HepG2 (cell line): ENCODE measurements at regions of chr3 and their contacts with region 1.

Region 1: GRCh38 chr3:82202269-82202668 is 440.8 kb upstream of the GBE1 start:
- DNase-seq: no peak
- ATAC-seq: no peak
- H3K4me3 ChIP-seq: no peak overlapping the region
- H3K27ac ChIP-seq: no peak overlapping the region
- H3K4me1 ChIP-seq: no peaks in the 10 kb centered on the region
- H3K27me3 ChIP-seq: no peaks in the 10 kb centered on the region
- CTCF ChIP-seq: no peak
- EP300 ChIP-seq: no peak
- POLR2A ChIP-seq: no peak
- RAD21 ChIP-seq: no peak

Region 2: GRCh38 chr3:82114589-82114988 is 87.7 kb before region 1 on chr3:
- CTCF ChIA-PET with region 1: no interaction called
- POLR2A ChIA-PET with region 1: no interaction called
- in situ Hi-C with region 1: no loop called
- intact Hi-C with region 1: no loop called
- DNase-seq: no peak
- ATAC-seq: no peak
- H3K4me3 ChIP-seq: no peak overlapping the region
- H3K27ac ChIP-seq: no peak overlapping the region
- H3K4me1 ChIP-seq: no peaks in the 10 kb centered on the region
- H3K27me3 ChIP-seq: no peaks in the 10 kb centered on the region; a peak in 1 of 5 replicates
- CTCF ChIP-seq: no peak
- EP300 ChIP-seq: no peak
- POLR2A ChIP-seq: no peak
- RAD21 ChIP-seq: no peak

Region 3: DNA sequence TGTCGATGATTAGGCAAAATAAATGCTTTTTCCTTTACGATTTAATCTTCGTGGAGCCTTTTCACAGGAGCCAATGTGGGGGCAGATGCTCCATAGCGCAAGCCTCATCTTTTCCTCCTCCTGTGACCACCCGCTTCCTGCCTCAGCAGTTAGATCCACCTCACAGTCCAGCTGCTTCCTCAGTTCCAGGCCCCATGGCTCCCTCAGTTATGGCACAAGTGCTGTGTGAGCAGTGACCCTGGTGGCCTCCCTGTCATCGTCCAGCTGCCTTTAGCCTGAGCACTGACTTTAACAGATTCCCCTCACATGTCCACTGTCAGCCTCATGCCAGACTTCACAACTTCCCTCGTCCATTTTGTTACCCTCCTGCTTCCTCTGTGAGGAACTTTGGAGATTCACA is 16.3 kb before region 1 on chr3:
- CTCF ChIA-PET with region 1: no interaction called
- POLR2A ChIA-PET with region 1: no interaction called
- in situ Hi-C with region 1: no loop called
- intact Hi-C with region 1: loop called (anchors 1 kb)
- DNase-seq: no peak
- ATAC-seq: peak; percentile 36; the same call in 1 of the 3 replicates
- H3K4me3 ChIP-seq: no peak overlapping the region
- H3K27ac ChIP-seq: no peak overlapping the region
- H3K4me1 ChIP-seq: no peaks in the 10 kb centered on the region
- H3K27me3 ChIP-seq: no peaks in the 10 kb centered on the region
- CTCF ChIP-seq: no peak
- EP300 ChIP-seq: no peak
- POLR2A ChIP-seq: no peak
- RAD21 ChIP-seq: no peak

Region 4: GRCh38 chr3:82229397-82229796 is 27.1 kb after region 1 on chr3:
- CTCF ChIA-PET with region 1: no interaction called
- POLR2A ChIA-PET with region 1: no interaction called
- in situ Hi-C with region 1: no loop called
- intact Hi-C with region 1: no loop called
- DNase-seq: no peak
- ATAC-seq: no peak
- H3K4me3 ChIP-seq: no peak overlapping the region
- H3K27ac ChIP-seq: no peak overlapping the region
- H3K4me1 ChIP-seq: no peaks in the 10 kb centered on the region
- H3K27me3 ChIP-seq: no peaks in the 10 kb centered on the region
- CTCF ChIP-seq: no peak
- EP300 ChIP-seq: no peak
- POLR2A ChIP-seq: no peak
- RAD21 ChIP-seq: no peak

Region 5: GRCh38 chr3:82685761-82686160 is 483.5 kb after region 1 on chr3:
- CTCF ChIA-PET with region 1: no interaction called
- POLR2A ChIA-PET with region 1: no interaction called
- in situ Hi-C with region 1: no loop called
- intact Hi-C with region 1: no loop called
- DNase-seq: no peak
- ATAC-seq: no peak
- H3K4me3 ChIP-seq: no peak overlapping the region
- H3K27ac ChIP-seq: no peak overlapping the region
- H3K4me1 ChIP-seq: no peaks in the 10 kb centered on the region
- H3K27me3 ChIP-seq: no peaks in the 10 kb centered on the region
- CTCF ChIP-seq: no peak
- EP300 ChIP-seq: no peak
- POLR2A ChIP-seq: no peak
- RAD21 ChIP-seq: no peak